ENCODE measurements at regions of chr2 and their contacts with region 1.

Region 1: DNA sequence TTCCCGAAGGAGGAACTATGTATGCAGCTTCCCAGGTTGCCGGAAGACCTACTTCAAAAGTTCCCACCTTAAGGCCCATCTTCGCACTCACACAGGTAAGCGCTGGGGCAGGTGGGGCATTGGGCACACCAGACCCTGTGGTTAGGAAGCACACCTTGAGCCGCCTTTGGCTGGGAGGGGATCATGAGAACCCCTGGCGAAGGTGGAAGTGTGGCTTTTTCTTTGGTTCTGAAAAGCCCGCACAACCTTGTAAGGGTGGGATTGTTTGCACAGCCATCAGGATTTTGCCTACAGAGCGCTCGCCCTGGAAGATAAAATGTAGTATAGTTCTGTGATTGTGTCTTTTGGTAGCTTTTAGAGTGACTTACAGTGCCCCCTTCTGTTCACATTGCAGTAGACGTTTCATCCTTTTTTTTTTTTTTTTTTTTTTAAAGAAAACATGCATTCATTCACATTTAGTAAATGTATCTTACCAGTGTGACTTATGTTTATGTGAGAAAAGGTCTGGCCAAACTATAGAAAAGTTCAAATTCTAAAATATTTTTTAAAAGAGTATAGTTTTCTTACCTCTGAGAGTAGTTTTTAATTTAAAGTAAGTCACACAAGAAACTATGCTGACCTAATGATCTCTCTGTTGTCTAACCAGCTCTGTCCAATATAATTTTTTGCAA is 5.3 kb downstream of the KLF11 start:
- DNase-seq: no peak
- H3K4me3 ChIP-seq: no peak overlapping the region
- H3K27ac ChIP-seq: peak overlapping the region in 1 of 3 donors; percentile 24
- H3K4me1 ChIP-seq: peaks cover 7 to 36% of the 10 kb centered on the region in 2 donors
- H3K27me3 ChIP-seq: no peaks in the 10 kb centered on the region
- CTCF ChIP-seq: peak; percentile 13 to 79 (median 44)
- POLR2A ChIP-seq: no peak

Region 2: GRCh38 chr2:9813312-9814133 is 235.1 kb before region 1 on chr2:
- intact Hi-C with region 1: loop called (anchors 5 kb)
- DNase-seq: peak; percentile 67 to 72
- H3K4me3 ChIP-seq: no peak overlapping the region
- H3K27ac ChIP-seq: no peak overlapping the region
- H3K4me1 ChIP-seq: peaks cover 12 to 21% of the 10 kb centered on the region in 2 donors
- H3K27me3 ChIP-seq: no peaks in the 10 kb centered on the region
- CTCF ChIP-seq: peak; percentile 82 to 95 (median 88)
- POLR2A ChIP-seq: no peak

Region 3: DNA sequence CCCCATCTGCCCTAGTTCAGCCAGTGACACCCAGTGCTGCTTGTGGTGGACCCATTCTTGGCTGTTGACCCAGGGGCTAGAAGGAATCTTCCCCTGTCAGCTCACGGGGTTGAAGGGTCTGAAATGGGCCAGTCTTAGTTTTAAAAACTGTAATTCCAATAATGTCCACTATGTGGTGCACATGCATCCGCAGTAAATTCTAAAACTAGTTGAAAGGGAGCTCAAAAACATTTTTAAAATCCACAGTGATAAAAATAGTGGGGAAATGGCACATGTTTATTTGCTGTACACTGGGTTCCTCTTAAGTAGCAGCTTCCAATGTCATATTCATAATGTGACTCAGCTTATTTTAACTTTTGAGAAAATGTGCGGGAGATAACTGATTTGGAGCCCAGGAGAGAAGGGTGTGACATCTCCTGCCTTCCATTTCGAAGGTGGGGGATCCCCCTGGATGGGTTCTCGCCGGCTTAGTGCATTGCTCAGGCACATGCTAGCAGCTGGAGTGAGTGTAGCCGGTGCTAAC is 64.4 kb before region 1 on chr2:
- intact Hi-C with region 1: loop called (anchors 5 kb)
- DNase-seq: no peak
- H3K4me3 ChIP-seq: no peak overlapping the region
- H3K27ac ChIP-seq: peak overlapping the region in 1 of 3 donors; percentile 26
- H3K4me1 ChIP-seq: peaks cover 0 to 41% of the 10 kb centered on the region in 2 donors
- H3K27me3 ChIP-seq: no peaks in the 10 kb centered on the region
- CTCF ChIP-seq: peak; percentile 51 to 92 (median 73)
- POLR2A ChIP-seq: no peak

Region 4: DNA sequence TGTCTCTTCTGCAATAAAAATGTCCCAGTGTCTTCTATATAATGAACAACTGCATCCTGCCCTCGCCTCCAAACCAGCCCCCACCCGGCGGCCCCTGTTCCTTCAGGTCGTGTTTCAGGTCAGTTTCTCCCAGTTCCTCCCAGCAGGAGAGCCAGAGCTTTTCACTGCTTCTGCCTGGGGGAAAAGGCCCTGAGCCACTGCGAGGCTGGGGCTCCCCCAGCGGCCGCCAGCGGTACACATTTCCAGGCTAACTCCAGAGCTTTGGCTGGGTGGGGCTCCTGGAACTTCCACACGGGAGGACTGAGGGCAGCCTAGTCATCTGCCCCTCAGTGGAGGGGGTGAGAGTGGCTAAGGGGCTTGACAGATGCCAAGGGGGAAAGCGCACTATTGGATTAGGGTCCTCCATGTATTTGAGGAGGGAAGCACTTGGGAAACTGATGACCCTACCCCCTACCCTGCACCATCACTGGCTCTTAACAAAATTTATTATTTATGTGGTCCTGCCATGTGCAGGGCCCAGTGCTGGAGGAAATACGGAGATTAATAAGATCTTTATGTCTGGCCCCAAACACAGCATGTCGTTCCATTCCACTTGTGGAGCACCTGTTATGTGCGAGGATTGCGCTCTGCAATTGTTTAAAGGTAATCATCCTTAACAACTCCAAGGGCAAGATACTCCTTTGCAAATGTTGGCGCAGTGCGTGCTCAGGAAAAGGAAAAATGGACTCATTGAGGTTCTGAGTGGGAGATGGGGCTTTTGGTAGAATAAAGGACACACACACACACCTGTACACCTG is 48.9 kb after region 1 on chr2:
- intact Hi-C with region 1: no loop called
- DNase-seq: peak; percentile 53 to 63
- H3K4me3 ChIP-seq: no peak overlapping the region
- H3K27ac ChIP-seq: no peak overlapping the region
- H3K4me1 ChIP-seq: peaks cover 0 to 8% of the 10 kb centered on the region in 2 donors
- H3K27me3 ChIP-seq: no peaks in the 10 kb centered on the region
- CTCF ChIP-seq: peak; percentile 71 to 96 (median 87)
- POLR2A ChIP-seq: no peak

Region 5: DNA sequence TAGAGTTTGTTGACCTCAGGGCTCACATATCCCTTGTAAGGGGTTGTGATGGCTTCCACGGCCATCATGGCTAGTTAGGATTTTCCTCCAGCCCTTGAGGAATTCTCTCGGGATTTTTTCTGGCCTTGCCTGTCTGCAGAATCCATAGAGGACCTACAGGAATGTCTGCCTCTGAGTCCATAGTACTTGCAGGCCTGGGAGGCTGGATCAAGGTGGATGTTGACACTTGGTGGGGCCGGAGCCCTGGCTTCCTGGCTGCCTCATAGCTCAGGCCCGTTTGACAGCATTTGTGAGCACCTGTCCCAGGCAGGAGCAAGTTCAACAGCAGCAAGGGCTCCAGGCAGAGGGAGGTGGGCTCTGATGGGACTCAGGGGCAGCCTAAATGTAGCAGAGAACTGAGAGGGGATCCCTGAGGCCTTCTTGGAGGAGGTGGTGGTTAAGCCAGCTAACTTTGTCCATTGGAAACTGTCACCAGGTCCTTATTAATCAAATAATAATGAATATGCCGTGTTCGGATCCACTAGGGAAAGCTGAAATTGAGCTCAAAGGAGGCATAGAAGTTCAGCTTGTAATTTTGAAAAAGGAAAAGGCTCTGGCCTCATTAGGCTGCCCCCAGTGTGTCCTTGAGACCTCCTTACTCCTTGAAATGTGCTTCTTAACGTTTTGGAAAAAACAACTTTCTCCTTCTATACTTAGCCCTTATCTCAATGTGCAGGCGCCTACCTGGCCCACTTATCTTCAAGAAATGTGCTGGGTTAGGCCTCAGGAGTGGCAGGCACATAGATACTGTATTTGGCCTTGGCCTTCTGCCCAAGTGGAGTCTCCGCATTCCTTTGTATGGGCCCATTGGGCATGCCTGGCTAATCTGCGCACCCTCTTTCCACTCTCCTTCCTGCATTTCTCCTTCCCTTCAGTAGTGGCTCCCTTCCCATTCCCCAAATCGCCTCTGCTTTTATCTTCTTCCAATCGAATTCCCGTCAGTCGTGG is 320.9 kb after region 1 on chr2:
- intact Hi-C with region 1: no loop called
- DNase-seq: peak; percentile 91
- H3K4me3 ChIP-seq: no peak overlapping the region
- H3K27ac ChIP-seq: peak overlapping the region; percentile 21 to 83 (median 72)
- H3K4me1 ChIP-seq: peaks cover 24 to 38% of the 10 kb centered on the region in 2 donors
- H3K27me3 ChIP-seq: no peaks in the 10 kb centered on the region
- CTCF ChIP-seq: no peak
- POLR2A ChIP-seq: no peak

Measured in thyroid gland (tissue), 4 donors.